Activated naive CD4-positive, alpha-beta T cell treated with anti-CD3 and anti-CD28 coated beads for 36 hours (primary cell): ENCODE measurements at regions of chr7 and their contacts with region 1.

Region 1: GRCh38 chr7:38424750-38425463 is 151.5 kb upstream of the TARP start:
- DNase-seq: no peak
- H3K4me3 Mint-ChIP-seq: no peak overlapping the region
- H3K27ac Mint-ChIP-seq: no peak overlapping the region
- H3K4me1 Mint-ChIP-seq: peaks cover 52% of the 10 kb centered on the region
- H3K27me3 Mint-ChIP-seq: no peaks in the 10 kb centered on the region

Region 2: GRCh38 chr7:38171623-38172391 is 253.1 kb before region 1 on chr7:
- CTCF ChIA-PET with region 1: no interaction called
- intact Hi-C with region 1: loop called (anchors 2 kb)
- DNase-seq: peak; percentile 29
- H3K4me3 Mint-ChIP-seq: no peak overlapping the region
- H3K27ac Mint-ChIP-seq: no peak overlapping the region
- H3K4me1 Mint-ChIP-seq: peaks cover 25% of the 10 kb centered on the region
- H3K27me3 Mint-ChIP-seq: peaks cover 13% of the 10 kb centered on the region

Region 3: DNA sequence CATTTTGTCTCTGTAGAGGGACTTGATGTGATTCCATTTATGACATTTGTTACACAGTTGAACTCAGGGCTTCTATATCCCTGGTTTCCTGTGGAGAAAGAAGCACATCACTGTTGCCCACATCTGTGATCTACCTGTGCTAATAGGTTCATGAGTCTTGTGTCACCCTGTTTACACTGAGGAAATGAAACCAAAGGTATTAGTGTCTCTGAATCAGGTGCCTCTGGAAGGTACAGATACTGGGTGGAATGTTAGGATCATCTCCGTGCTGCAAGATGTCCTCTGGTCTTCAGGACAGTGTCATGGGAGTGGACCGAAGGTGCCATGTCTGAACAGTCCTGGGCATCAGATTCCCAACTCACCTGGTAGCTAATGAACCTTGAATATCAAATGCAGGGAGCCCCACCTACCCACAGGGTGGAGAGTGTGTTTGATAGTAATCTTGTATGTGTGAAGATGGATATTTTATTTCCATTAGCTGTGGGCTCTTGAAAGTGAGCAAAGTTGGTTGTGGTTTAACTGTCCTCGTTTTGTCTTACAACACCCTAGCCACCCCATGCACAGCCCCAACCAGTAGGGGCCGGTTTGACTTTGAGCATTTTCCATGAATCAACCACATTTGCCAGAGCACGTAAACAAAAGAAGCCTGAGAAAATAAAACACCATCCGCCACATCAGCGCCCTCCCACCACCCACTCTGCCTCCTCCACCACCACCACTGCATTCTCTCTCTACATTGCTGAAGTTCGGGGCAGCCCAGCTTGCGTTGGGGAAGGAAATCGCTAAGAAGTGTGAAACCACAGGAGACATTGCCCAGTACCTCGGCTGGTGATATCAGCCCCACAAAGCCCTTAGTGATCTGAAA is 192.2 kb before region 1 on chr7:
- CTCF ChIA-PET with region 1: no interaction called
- intact Hi-C with region 1: no loop called
- DNase-seq: peak; percentile 82
- H3K4me3 Mint-ChIP-seq: peak overlapping the region; percentile 9
- H3K27ac Mint-ChIP-seq: peak overlapping the region; percentile 2
- H3K4me1 Mint-ChIP-seq: peaks cover 21% of the 10 kb centered on the region
- H3K27me3 Mint-ChIP-seq: no peaks in the 10 kb centered on the region

Region 4: GRCh38 chr7:38463277-38464225 is 38.6 kb after region 1 on chr7:
- CTCF ChIA-PET with region 1: no interaction called
- intact Hi-C with region 1: loop called (anchors 1 kb)
- DNase-seq: peak; percentile 90
- H3K4me3 Mint-ChIP-seq: no peak overlapping the region
- H3K27ac Mint-ChIP-seq: peak overlapping the region; percentile 30
- H3K4me1 Mint-ChIP-seq: peaks cover 19% of the 10 kb centered on the region
- H3K27me3 Mint-ChIP-seq: no peaks in the 10 kb centered on the region

Region 5: GRCh38 chr7:38660427-38661099 is 235.7 kb after region 1 on chr7:
- CTCF ChIA-PET with region 1: no interaction called
- intact Hi-C with region 1: loop called (anchors 1 kb)
- DNase-seq: peak; percentile 43
- H3K4me3 Mint-ChIP-seq: no peak overlapping the region
- H3K27ac Mint-ChIP-seq: no peak overlapping the region
- H3K4me1 Mint-ChIP-seq: no peaks in the 10 kb centered on the region
- H3K27me3 Mint-ChIP-seq: peaks cover 13% of the 10 kb centered on the region